Adrenal gland (tissue), 19 donors: ENCODE measurements at regions of chr10 and their contacts with region 1.

Region 1: GRCh38 chr10:125160856-125161706 is 718 bp upstream of the CTBP2 start:
- DNase-seq: peak; percentile 74 to 90 (median 82)
- H3K4me3 ChIP-seq: peak overlapping the region; percentile 10 to 97 (median 51)
- H3K27ac ChIP-seq: peak overlapping the region; percentile 35 to 99 (median 88)
- H3K4me1 ChIP-seq: peaks cover 28 to 31% of the 10 kb centered on the region in 2 donors
- H3K27me3 ChIP-seq: no peaks in the 10 kb centered on the region
- CTCF ChIP-seq: peak; percentile 23 to 58 (median 52)
- POLR2A ChIP-seq: peak in 1 of 2 donors; percentile 71

Region 2: GRCh38 chr10:125084191-125084613 is 76.9 kb before region 1 on chr10:
- intact Hi-C with region 1: loop called in 1 of 2 experiments (anchors 10 kb)
- DNase-seq: peak; percentile 79 to 90 (median 88)
- H3K4me3 ChIP-seq: no peak overlapping the region
- H3K27ac ChIP-seq: peak overlapping the region; percentile 51 to 97 (median 89)
- H3K4me1 ChIP-seq: peaks cover 20 to 51% of the 10 kb centered on the region in 2 donors
- H3K27me3 ChIP-seq: no peaks in the 10 kb centered on the region
- CTCF ChIP-seq: peak in 4 of 6 experiments; percentile 6 to 35 (median 14)
- POLR2A ChIP-seq: no peak

Region 3: GRCh38 chr10:125337510-125337909 is 176.4 kb after region 1 on chr10:
- intact Hi-C with region 1: loop called in 1 of 2 experiments (anchors 10 kb)
- DNase-seq: no peak
- H3K4me3 ChIP-seq: no peak overlapping the region
- H3K27ac ChIP-seq: no peak overlapping the region
- H3K4me1 ChIP-seq: no peaks in the 10 kb centered on the region
- H3K27me3 ChIP-seq: no peaks in the 10 kb centered on the region
- CTCF ChIP-seq: no peak
- POLR2A ChIP-seq: no peak